Activated CD8-positive, alpha-beta T cell treated with anti-CD3 and anti-CD28 coated beads, Interleukin-2, amount 10 ng/mL, durations not matched to agents 7 days and 5 days (primary cell): ENCODE measurements at regions of chr17 and their contacts with region 1.

Region 1: DNA sequence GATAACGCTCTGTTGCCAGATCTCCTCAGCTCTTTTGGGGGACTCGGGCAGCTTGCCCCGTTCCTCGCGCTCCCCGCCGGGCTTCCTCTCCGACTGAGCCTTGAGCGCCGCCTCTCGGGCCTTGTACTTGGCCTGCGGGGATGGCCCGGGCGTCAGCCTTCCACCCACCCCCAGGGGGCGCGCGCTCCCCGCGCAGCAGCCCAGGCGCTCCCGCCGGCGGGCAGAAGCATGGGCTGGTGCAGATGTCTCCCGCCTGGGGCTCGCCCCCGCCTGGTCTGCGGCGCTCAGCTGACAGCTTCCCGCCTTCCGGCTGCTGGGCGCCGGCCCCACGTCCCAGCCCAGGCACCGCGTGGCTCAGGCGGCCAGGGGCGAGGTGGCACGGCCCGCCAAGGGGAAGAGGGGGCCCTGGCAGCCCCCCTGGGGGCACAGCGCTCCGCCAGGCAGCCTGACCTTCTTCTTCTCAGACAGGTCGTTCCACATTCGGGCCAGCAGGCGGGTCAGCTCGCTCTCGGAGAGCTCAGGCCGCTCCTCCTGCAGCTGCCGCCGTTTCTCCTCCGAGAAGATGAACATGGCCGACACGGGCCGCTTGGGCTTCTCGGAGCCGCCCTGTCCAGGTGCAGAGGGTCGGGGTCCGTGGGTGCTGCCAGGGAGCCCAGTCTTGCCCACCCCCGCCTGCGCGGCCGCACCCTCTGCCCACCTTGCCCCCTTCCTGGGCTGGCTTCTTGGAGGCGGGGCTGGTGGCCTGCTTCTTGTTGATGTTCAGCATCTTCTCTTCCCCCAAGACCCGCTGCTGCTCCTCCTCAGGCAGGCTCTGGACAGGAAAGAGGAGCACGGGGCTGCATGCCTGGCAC is 8.9 kb downstream of the UBTF start:
- DNase-seq: peak; percentile 95
- ATAC-seq: peak; percentile 100
- H3K4me3 Mint-ChIP-seq: peak overlapping the region; percentile 68
- H3K27ac Mint-ChIP-seq: peak overlapping the region; percentile 84
- H3K4me1 Mint-ChIP-seq: peaks cover 61% of the 10 kb centered on the region
- H3K27me3 Mint-ChIP-seq: no peaks in the 10 kb centered on the region

Region 2: GRCh38 chr17:44095642-44096496 is 114.7 kb before region 1 on chr17:
- CTCF ChIA-PET with region 1: no interaction called
- POLR2A ChIA-PET with region 1: no interaction called
- DNase-seq: no peak
- ATAC-seq: peak; percentile 29
- H3K4me3 Mint-ChIP-seq: no peak overlapping the region
- H3K27ac Mint-ChIP-seq: peak overlapping the region; percentile 22
- H3K4me1 Mint-ChIP-seq: peaks cover 19% of the 10 kb centered on the region
- H3K27me3 Mint-ChIP-seq: no peaks in the 10 kb centered on the region

Region 3: GRCh38 chr17:44199553-44200477 is 10.8 kb before region 1 on chr17 and contains the start of gene ATXN7L3:
- CTCF ChIA-PET with region 1: interaction called, 37 read pairs
- POLR2A ChIA-PET with region 1: interaction called, 19 read pairs
- DNase-seq: peak; percentile 100
- ATAC-seq: peak; percentile 84
- H3K4me3 Mint-ChIP-seq: peak within 1 kb of the TSS; percentile 88
- H3K27ac Mint-ChIP-seq: peak within 1 kb of the TSS; percentile 95
- H3K4me1 Mint-ChIP-seq: peaks cover 43% of the 10 kb centered on the region
- H3K27me3 Mint-ChIP-seq: no peaks in the 10 kb centered on the region
- total RNA-seq, gene ATXN7L3: 116 to 120 TPM

Region 4: GRCh38 chr17:44308320-44308818 is 97.8 kb after region 1 on chr17 and contains the start of gene RUNDC3A:
- CTCF ChIA-PET with region 1: interaction called, 19 read pairs
- POLR2A ChIA-PET with region 1: no interaction called
- DNase-seq: peak; percentile 85
- ATAC-seq: peak; percentile 84
- H3K4me3 Mint-ChIP-seq: peak within 1 kb of the TSS; percentile 10
- H3K27ac Mint-ChIP-seq: no peak within 1 kb of the TSS
- H3K4me1 Mint-ChIP-seq: peaks cover 17% of the 10 kb centered on the region
- H3K27me3 Mint-ChIP-seq: peaks cover 32% of the 10 kb centered on the region
- total RNA-seq, gene RUNDC3A: 0.18 TPM in 1 of 2 experiments, not detected in the other

Region 5: DNA sequence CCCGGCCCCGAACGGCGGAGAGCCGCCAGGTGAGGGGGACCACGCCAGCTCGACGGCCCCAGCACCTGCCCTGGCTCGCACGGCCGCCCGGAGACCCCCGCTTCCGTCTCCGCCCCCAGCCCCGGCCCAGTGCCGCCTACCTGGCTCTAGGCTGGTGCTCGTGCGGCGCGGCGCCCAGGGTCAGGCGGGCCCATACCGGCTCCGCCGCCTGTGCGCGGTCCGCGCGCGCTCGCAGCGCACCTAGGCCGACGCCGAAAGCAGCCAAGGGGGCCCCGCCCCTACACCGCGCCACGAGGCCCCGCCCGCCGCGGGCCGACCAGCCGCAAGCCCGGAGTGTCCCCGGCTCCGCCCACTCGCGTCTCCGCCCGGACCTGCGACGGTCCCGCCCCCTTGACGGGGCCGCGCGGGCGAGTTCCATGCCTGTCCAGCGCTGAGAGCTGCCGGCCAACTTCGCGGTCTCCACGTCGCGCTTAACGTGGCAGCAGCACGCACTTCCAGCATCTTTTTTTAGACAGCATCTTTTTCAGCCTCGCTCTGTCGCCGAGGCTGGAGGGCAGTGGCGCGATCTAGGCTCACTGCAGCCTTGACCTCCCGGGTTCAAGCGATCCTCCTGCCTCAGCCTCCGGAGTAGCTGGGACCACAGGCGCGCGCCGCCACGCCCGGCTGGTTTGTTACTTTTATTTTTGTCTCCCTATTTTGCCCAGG is 114.2 kb after region 1 on chr17 and contains the start of gene SLC25A39:
- CTCF ChIA-PET with region 1: interaction called, 67 read pairs
- POLR2A ChIA-PET with region 1: interaction called, 59 read pairs
- DNase-seq: peak; percentile 94
- ATAC-seq: peak; percentile 84
- H3K4me3 Mint-ChIP-seq: peak within 1 kb of the TSS; percentile 89
- H3K27ac Mint-ChIP-seq: peak within 1 kb of the TSS; percentile 89
- H3K4me1 Mint-ChIP-seq: peaks cover 26% of the 10 kb centered on the region
- H3K27me3 Mint-ChIP-seq: no peaks in the 10 kb centered on the region
- total RNA-seq, gene SLC25A39: 140 to 141 TPM

Region 6: DNA sequence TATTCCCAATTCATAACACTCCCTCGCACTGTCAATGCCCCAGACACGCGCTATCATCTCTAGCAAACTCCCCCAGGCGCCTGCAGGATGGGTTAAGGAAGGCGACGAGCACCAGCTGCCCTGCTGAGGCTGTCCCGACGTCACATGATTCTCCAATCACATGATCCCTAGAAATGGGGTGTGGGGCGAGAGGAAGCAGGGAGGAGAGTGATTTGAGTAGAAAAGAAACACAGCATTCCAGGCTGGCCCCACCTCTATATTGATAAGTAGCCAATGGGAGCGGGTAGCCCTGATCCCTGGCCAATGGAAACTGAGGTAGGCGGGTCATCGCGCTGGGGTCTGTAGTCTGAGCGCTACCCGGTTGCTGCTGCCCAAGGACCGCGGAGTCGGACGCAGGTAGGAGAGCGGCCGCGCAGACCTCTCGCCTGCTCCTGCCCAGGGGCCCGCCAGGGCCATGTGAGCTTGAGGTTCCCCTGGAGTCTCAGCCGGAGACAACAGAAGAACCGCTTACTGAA is 134.4 kb after region 1 on chr17 and contains the start of gene GRN:
- CTCF ChIA-PET with region 1: interaction called, 68 read pairs
- POLR2A ChIA-PET with region 1: no interaction called
- DNase-seq: peak; percentile 91
- ATAC-seq: peak; percentile 99
- H3K4me3 Mint-ChIP-seq: peak within 1 kb of the TSS; percentile 88
- H3K27ac Mint-ChIP-seq: peak within 1 kb of the TSS; percentile 75
- H3K4me1 Mint-ChIP-seq: peaks cover 30% of the 10 kb centered on the region
- H3K27me3 Mint-ChIP-seq: peaks cover 20% of the 10 kb centered on the region
- total RNA-seq, gene GRN: 45.6 to 46.7 TPM

Region 7: GRCh38 chr17:44464037-44464436 is 253.5 kb after region 1 on chr17:
- CTCF ChIA-PET with region 1: no interaction called
- POLR2A ChIA-PET with region 1: no interaction called
- DNase-seq: no peak
- ATAC-seq: no peak
- H3K4me3 Mint-ChIP-seq: no peak overlapping the region
- H3K27ac Mint-ChIP-seq: no peak overlapping the region
- H3K4me1 Mint-ChIP-seq: peaks cover 7% of the 10 kb centered on the region
- H3K27me3 Mint-ChIP-seq: no peaks in the 10 kb centered on the region